CD14-positive monocyte (primary cell): ENCODE measurements at regions of chr1 and their contacts with region 1.

Region 1: GRCh38 chr1:225474986-225475820 is 47.4 kb upstream of the LBR start:
- DNase-seq: peak; percentile 60 to 76 (median 66)
- H3K4me3 ChIP-seq: no peak overlapping the region
- H3K4me3 Mint-ChIP-seq: no peak overlapping the region
- H3K27ac ChIP-seq: no peak overlapping the region
- H3K27ac Mint-ChIP-seq: peak overlapping the region in 1 of 7 donors; percentile 26
- H3K4me1 ChIP-seq: peaks cover 13 to 17% of the 10 kb centered on the region in 2 donors
- H3K4me1 Mint-ChIP-seq: peaks cover 20% of the 10 kb centered on the region
- H3K27me3 ChIP-seq: no peaks in the 10 kb centered on the region
- H3K27me3 Mint-ChIP-seq: peaks cover 0 to 7% (median 4%) of the 10 kb centered on the region in 3 donors
- CTCF ChIP-seq: peak; percentile 100

Region 2: GRCh38 chr1:225539069-225539468 is 63.9 kb after region 1 on chr1:
- intact Hi-C with region 1: no loop called
- DNase-seq: no peak
- H3K4me3 ChIP-seq: no peak overlapping the region
- H3K4me3 Mint-ChIP-seq: no peak overlapping the region
- H3K27ac ChIP-seq: no peak overlapping the region
- H3K27ac Mint-ChIP-seq: no peak overlapping the region
- H3K4me1 ChIP-seq: peaks cover 0 to 6% of the 10 kb centered on the region in 2 donors
- H3K4me1 Mint-ChIP-seq: peaks cover 10% of the 10 kb centered on the region
- H3K27me3 ChIP-seq: no peaks in the 10 kb centered on the region
- H3K27me3 Mint-ChIP-seq: peaks cover 0 to 2% (median 0%) of the 10 kb centered on the region in 3 donors
- CTCF ChIP-seq: no peak

Region 3: DNA sequence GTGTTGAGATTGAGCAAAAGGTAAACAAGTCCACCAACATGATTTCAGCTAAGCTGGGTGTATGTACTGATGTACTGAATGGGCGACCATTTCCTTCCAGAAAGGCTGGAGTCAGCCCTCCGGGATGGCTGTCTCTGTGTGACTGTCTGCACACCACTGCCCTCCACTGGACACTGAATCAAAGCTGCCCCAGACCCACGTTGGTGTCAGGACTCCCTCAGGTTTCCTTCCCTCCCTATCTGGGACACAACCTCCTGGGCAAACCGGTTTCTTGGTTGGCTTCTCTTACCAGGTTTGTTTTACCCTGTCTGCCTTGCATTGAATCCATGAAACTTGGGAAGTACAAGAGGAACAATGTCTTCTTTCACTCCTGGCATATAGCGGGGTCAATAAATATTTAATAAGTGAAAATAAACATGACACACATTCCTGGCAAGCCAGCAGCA is 297.1 kb after region 1 on chr1:
- intact Hi-C with region 1: loop called (anchors 2 to 5 kb)
- DNase-seq: peak; percentile 53 to 77 (median 70)
- H3K4me3 ChIP-seq: no peak overlapping the region
- H3K4me3 Mint-ChIP-seq: no peak overlapping the region
- H3K27ac ChIP-seq: no peak overlapping the region
- H3K27ac Mint-ChIP-seq: no peak overlapping the region
- H3K4me1 ChIP-seq: peaks cover 10 to 13% of the 10 kb centered on the region in 2 donors
- H3K4me1 Mint-ChIP-seq: peaks cover 4% of the 10 kb centered on the region
- H3K27me3 ChIP-seq: no peaks in the 10 kb centered on the region
- H3K27me3 Mint-ChIP-seq: peaks cover 0 to 2% (median 1%) of the 10 kb centered on the region in 3 donors
- CTCF ChIP-seq: peak; percentile 79

Region 4: GRCh38 chr1:225911191-225912130 is 436.3 kb after region 1 on chr1:
- intact Hi-C with region 1: loop called (anchors 5 kb)
- DNase-seq: peak; percentile 42 to 47 (median 45)
- H3K4me3 ChIP-seq: no peak overlapping the region
- H3K4me3 Mint-ChIP-seq: no peak overlapping the region
- H3K27ac ChIP-seq: no peak overlapping the region
- H3K27ac Mint-ChIP-seq: no peak overlapping the region
- H3K4me1 ChIP-seq: peaks cover 0 to 6% of the 10 kb centered on the region in 2 donors
- H3K4me1 Mint-ChIP-seq: no peaks in the 10 kb centered on the region
- H3K27me3 ChIP-seq: no peaks in the 10 kb centered on the region
- H3K27me3 Mint-ChIP-seq: peaks cover 0 to 2% (median 2%) of the 10 kb centered on the region in 3 donors
- CTCF ChIP-seq: peak; percentile 89

Region 5: GRCh38 chr1:225977937-225978748 is 502.9 kb after region 1 on chr1:
- intact Hi-C with region 1: loop called (anchors 2 to 5 kb)
- DNase-seq: no peak
- H3K4me3 ChIP-seq: no peak overlapping the region
- H3K4me3 Mint-ChIP-seq: no peak overlapping the region
- H3K27ac ChIP-seq: no peak overlapping the region
- H3K27ac Mint-ChIP-seq: peak overlapping the region in 3 of 7 donors; percentile 1 to 51 (median 6)
- H3K4me1 ChIP-seq: peaks cover 0 to 5% of the 10 kb centered on the region in 2 donors
- H3K4me1 Mint-ChIP-seq: peaks cover 16% of the 10 kb centered on the region
- H3K27me3 ChIP-seq: no peaks in the 10 kb centered on the region
- H3K27me3 Mint-ChIP-seq: peaks cover 0 to 3% (median 0%) of the 10 kb centered on the region in 3 donors
- CTCF ChIP-seq: no peak